ENCODE measurements at regions of chr20 and their contacts with region 1.

Region 1: DNA sequence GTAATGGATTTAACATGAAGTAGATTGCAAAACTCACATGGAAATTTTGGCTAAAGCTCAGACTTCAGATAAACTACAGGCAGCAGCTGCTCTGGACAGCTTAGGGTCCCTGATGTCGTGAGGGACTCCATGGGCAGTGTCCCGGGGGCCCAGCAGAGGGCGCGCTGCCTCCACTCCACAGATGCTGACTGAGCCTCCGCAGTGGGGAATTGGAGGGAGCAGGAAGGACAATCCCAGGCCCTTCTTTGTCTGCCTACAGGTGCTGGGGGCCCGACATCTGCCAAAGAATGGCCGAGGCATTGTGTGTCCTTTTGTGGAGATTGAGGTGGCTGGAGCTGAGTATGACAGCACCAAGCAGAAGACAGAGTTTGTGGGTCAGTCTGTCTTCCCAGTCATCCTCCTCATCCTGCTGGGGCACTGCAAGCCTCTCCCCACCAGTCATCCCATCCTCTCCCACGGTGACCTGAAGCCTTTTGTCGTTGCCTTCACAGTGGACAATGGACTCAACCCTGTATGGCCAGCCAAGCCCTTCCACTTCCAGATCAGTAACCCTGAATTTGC is 35.9 kb downstream of the PLCG1 start:
- DNase-seq: peak; percentile 85
- H3K4me3 ChIP-seq: peak overlapping the region in 1 of 2 experiments; percentile 30; a peak in 1 of 4 replicates
- H3K27ac ChIP-seq: peak overlapping the region in 1 of 2 experiments; percentile 29; a peak in 1 of 4 replicates
- H3K4me1 ChIP-seq: peaks cover 0 to 10% of the 10 kb centered on the region in 2 experiments; a peak in 3 of 4 replicates
- H3K27me3 ChIP-seq: no peaks in the 10 kb centered on the region
- CTCF ChIP-seq: peak; percentile 95
- EP300 ChIP-seq: no peak
- RAD21 ChIP-seq: peak; percentile 92

Region 2: DNA sequence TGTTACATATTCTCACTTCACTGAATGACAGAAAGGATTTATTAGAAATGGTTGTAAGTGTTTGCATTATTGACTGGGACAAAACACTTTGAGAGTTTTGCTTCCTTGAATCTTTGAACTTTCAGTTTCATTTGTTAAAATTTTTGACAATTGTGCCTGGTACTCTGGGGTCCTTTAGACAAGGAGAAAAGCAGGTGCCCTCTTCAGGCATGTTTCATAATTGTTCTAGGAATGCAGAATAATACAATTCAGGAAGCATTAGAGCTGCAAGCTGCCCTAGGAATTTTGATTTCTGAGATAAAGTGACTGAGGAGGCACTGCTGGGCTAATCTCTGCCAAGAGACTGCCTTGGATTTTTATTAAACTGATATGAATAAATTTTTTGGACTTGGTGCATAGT is 94.9 kb before region 1 on chr20:
- CTCF ChIA-PET with region 1: no interaction called
- POLR2A ChIA-PET with region 1: no interaction called
- DNase-seq: peak; percentile 30
- H3K4me3 ChIP-seq: no peak overlapping the region
- H3K27ac ChIP-seq: peak overlapping the region; percentile 71 to 73; a peak in 3 of 4 replicates
- H3K4me1 ChIP-seq: peaks cover 13 to 28% of the 10 kb centered on the region in 2 experiments
- H3K27me3 ChIP-seq: no peaks in the 10 kb centered on the region
- CTCF ChIP-seq: peak; percentile 82
- EP300 ChIP-seq: peak; percentile 58 to 67; a peak in 3 of 4 replicates
- RAD21 ChIP-seq: peak; percentile 66

Region 3: GRCh38 chr20:41116282-41116956 is 56.8 kb before region 1 on chr20:
- CTCF ChIA-PET with region 1: no interaction called
- POLR2A ChIA-PET with region 1: no interaction called
- DNase-seq: no peak
- H3K4me3 ChIP-seq: no peak overlapping the region
- H3K27ac ChIP-seq: no peak overlapping the region
- H3K4me1 ChIP-seq: peaks cover 0 to 4% of the 10 kb centered on the region in 2 experiments; a peak in 2 of 4 replicates
- H3K27me3 ChIP-seq: no peaks in the 10 kb centered on the region
- CTCF ChIP-seq: no peak
- EP300 ChIP-seq: no peak
- RAD21 ChIP-seq: no peak

Region 4: GRCh38 chr20:41136680-41137613 is 36.3 kb before region 1 on chr20 and contains the start of gene PLCG1:
- CTCF ChIA-PET with region 1: interaction called, 16 read pairs
- POLR2A ChIA-PET with region 1: interaction called, 3 read pairs
- DNase-seq: peak; percentile 99
- H3K4me3 ChIP-seq: peak within 1 kb of the TSS; percentile 94 to 97
- H3K27ac ChIP-seq: peak within 1 kb of the TSS; percentile 79 to 93
- H3K4me1 ChIP-seq: peaks cover 9 to 41% of the 10 kb centered on the region in 2 experiments; a peak in 3 of 4 replicates
- H3K27me3 ChIP-seq: no peaks in the 10 kb centered on the region
- CTCF ChIP-seq: no peak
- EP300 ChIP-seq: no peak
- RAD21 ChIP-seq: no peak
- polyA plus RNA-seq, gene PLCG1: 81.4 and 81.9 TPM in 2 replicates

Region 5: DNA sequence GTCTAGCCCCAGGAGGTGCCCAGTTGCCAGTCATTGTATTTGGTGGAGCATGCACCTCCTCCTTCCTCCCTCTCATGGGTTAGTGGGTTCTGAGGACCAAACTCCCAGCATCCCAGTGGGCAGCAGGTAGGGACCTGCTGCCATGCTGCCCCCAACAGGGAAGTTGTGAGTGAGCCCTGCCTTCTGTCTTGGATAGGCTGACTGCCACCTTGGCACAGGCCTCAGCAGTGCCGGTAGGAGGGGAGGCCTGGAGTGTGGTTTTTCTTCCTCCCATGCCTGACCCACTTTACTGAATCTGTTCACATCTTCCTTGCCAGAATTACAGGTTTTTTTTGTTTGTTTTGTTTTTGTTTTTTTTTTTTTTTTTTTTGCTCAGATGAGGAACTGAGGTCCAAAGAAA is 11.4 kb before region 1 on chr20:
- CTCF ChIA-PET with region 1: interaction called, 67 read pairs
- POLR2A ChIA-PET with region 1: no interaction called
- DNase-seq: no peak
- H3K4me3 ChIP-seq: no peak overlapping the region
- H3K27ac ChIP-seq: no peak overlapping the region
- H3K4me1 ChIP-seq: no peaks in the 10 kb centered on the region; a peak in 1 of 4 replicates
- H3K27me3 ChIP-seq: no peaks in the 10 kb centered on the region
- CTCF ChIP-seq: no peak
- EP300 ChIP-seq: no peak
- RAD21 ChIP-seq: no peak

Region 6: DNA sequence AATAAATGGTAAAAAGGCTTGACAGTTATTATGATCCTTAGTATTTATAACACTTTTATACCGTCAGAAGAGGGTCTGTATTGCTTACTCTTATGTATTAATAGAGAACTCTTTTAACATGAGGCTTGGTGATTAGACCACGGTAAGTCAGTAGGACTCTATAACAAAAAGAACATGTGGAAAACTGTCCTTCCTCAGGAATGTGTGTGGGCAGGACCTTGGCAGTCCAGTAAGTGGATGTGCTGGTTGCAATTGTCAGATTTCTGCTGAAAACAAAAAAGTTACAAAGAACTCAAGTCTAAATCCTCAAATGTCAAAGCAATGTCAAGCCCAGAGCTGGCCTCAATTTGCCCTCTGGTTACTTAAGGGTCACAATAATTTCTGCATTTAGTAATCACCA is 45.2 kb after region 1 on chr20:
- CTCF ChIA-PET with region 1: interaction called, 21 read pairs
- POLR2A ChIA-PET with region 1: no interaction called
- DNase-seq: no peak
- H3K4me3 ChIP-seq: no peak overlapping the region
- H3K27ac ChIP-seq: no peak overlapping the region
- H3K4me1 ChIP-seq: peaks cover 0 to 17% of the 10 kb centered on the region in 2 experiments; a peak in 3 of 4 replicates
- H3K27me3 ChIP-seq: no peaks in the 10 kb centered on the region
- CTCF ChIP-seq: no peak
- EP300 ChIP-seq: no peak
- RAD21 ChIP-seq: no peak

Region 7: GRCh38 chr20:41242807-41243206 is 69.6 kb after region 1 on chr20:
- CTCF ChIA-PET with region 1: interaction called, 18 read pairs
- POLR2A ChIA-PET with region 1: no interaction called
- DNase-seq: no peak
- H3K4me3 ChIP-seq: no peak overlapping the region
- H3K27ac ChIP-seq: no peak overlapping the region
- H3K4me1 ChIP-seq: no peaks in the 10 kb centered on the region; a peak in 1 of 4 replicates
- H3K27me3 ChIP-seq: no peaks in the 10 kb centered on the region
- CTCF ChIP-seq: no peak
- EP300 ChIP-seq: no peak
- RAD21 ChIP-seq: no peak

Measured in SK-N-SH (cell line).